Activated CD4-positive, alpha-beta memory T cell treated with anti-CD3 and anti-CD28 coated beads, Interleukin-2, amount 10 ng/mL, durations not matched to agents 7 days and 5 days (primary cell): ENCODE measurements at regions of chr12 and their contacts with region 1.

Region 1: GRCh38 chr12:123043536-123044001 is 63.1 kb downstream of the ARL6IP4 start:
- DNase-seq: peak; percentile 71
- H3K4me3 Mint-ChIP-seq: no peak overlapping the region
- H3K27ac Mint-ChIP-seq: no peak overlapping the region
- H3K4me1 Mint-ChIP-seq: peaks cover 15% of the 10 kb centered on the region
- H3K27me3 Mint-ChIP-seq: no peaks in the 10 kb centered on the region

Region 2: DNA sequence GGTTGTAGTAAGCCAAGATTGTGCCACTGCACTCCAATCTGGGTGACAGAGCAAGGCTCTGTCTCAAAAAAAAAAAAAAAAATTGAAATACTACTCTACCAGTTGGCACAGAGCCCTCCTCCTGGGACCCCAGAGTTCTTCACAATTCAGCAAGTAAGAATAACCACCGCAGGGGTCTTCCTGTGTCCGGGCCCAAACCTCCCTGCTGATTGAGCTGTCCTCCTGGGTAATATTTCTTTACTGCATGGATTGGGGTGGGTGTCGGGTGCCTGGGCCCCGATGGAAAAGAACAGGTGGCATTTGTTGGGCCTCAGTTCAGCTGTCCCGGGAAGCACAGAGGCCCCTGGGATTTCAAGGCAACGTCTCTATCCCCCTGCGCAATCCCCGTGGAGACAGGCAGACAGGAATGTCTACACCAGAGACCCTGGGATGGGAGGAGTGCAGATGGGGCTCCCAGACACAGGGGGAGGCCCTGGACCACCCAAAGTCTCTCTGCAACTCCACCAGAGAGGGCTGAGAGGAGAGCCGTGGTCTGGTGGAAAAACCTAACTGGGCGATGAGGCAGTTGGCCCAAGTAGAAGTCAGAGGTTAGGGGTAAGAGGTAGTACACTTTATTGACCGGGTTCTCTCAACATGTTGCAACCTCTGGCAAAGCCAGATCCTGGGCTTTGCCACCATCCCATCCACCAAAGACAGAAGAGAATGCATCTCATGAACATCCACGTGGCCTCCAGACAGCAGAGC is 115.0 kb before region 1 on chr12:
- CTCF ChIA-PET with region 1: no interaction called
- POLR2A ChIA-PET with region 1: no interaction called
- DNase-seq: no peak
- H3K4me3 Mint-ChIP-seq: no peak overlapping the region
- H3K27ac Mint-ChIP-seq: no peak overlapping the region
- H3K4me1 Mint-ChIP-seq: no peaks in the 10 kb centered on the region
- H3K27me3 Mint-ChIP-seq: no peaks in the 10 kb centered on the region

Region 3: GRCh38 chr12:122974274-122974891 is 69.2 kb before region 1 on chr12:
- CTCF ChIA-PET with region 1: no interaction called
- POLR2A ChIA-PET with region 1: no interaction called
- DNase-seq: peak; percentile 99
- H3K4me3 Mint-ChIP-seq: peak overlapping the region; percentile 97
- H3K27ac Mint-ChIP-seq: peak overlapping the region; percentile 98
- H3K4me1 Mint-ChIP-seq: peaks cover 34% of the 10 kb centered on the region
- H3K27me3 Mint-ChIP-seq: no peaks in the 10 kb centered on the region

Region 4: GRCh38 chr12:123150744-123151456 is 107.3 kb after region 1 on chr12 and contains the start of gene PITPNM2:
- CTCF ChIA-PET with region 1: interaction called, 17 read pairs
- POLR2A ChIA-PET with region 1: no interaction called
- DNase-seq: peak; percentile 64
- H3K4me3 Mint-ChIP-seq: peak within 1 kb of the TSS; percentile 74
- H3K27ac Mint-ChIP-seq: peak within 1 kb of the TSS; percentile 54
- H3K4me1 Mint-ChIP-seq: peaks cover 16% of the 10 kb centered on the region
- H3K27me3 Mint-ChIP-seq: peaks cover 22% of the 10 kb centered on the region
- total RNA-seq, gene PITPNM2: 8.1 to 9.3 TPM